H1 (cell line): ENCODE measurements at regions of chr17 and their contacts with region 1.

Region 1: DNA sequence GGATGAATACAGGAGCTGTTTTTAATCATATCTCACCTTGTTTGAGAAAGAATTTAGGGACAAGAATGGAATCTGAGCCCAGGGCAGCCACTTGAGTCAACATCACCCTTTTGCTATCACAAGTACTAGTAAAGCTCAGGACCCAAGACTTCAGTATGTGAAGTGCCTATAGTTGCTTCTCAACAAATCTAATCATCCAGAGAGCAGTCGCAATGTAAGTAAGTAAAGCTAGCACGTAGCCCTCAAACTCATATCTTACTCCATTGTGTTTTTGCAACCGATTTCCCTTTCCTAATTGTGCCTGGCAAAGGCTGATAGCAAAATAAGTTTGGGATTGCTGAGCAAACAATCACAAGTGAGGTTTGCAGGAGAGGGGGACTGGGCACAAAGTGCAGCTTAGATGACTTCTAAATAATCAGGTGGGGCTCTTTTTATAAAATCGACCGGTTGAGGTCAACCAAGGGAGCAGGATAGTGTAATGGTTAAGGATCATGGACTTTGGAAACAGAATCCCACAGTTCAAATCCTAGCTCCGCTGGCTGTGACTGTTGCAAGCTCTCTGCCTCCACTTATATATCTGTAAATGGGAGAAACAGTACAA is 13.0 kb downstream of the TOB1 start:
- DNase-seq: no peak
- H3K4me3 ChIP-seq: no peak overlapping the region
- H3K27ac ChIP-seq: no peak overlapping the region
- H3K4me1 ChIP-seq: peaks cover 0 to 4% (median 0%) of the 10 kb centered on the region in 4 experiments; a peak in 1 of 7 replicates
- H3K27me3 ChIP-seq: no peaks in the 10 kb centered on the region
- CTCF ChIP-seq: no peak
- EP300 ChIP-seq: no peak
- POLR2A ChIP-seq: no peak
- RAD21 ChIP-seq: no peak

Region 2: DNA sequence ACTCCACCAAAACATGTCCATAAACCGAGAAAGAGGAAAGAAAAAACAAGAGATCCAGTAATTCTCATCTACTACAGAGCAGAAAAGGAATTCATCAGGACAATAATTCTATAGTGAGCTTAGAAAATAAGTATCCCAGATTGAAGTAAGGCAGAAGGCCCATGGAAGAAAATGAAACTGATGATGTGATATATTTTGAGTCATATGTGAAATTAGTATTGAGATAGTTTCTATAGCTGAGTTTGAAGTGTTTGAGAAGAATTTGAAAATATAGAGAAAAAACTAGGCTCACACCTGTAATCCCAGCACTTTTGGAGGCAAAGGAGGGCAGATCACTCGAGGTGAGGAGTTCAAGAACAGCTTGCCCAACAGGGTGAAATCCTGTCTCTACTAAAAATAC is 114.0 kb before region 1 on chr17:
- CTCF ChIA-PET with region 1: no interaction called
- POLR2A ChIA-PET with region 1: no interaction called
- DNase-seq: no peak
- H3K4me3 ChIP-seq: no peak overlapping the region
- H3K27ac ChIP-seq: no peak overlapping the region
- H3K4me1 ChIP-seq: no peaks in the 10 kb centered on the region
- H3K27me3 ChIP-seq: no peaks in the 10 kb centered on the region
- CTCF ChIP-seq: no peak
- EP300 ChIP-seq: no peak
- POLR2A ChIP-seq: no peak
- RAD21 ChIP-seq: no peak

Region 3: GRCh38 chr17:50798424-50799288 is 54.5 kb before region 1 on chr17:
- CTCF ChIA-PET with region 1: interaction called, 23 read pairs
- POLR2A ChIA-PET with region 1: no interaction called
- DNase-seq: no peak
- H3K4me3 ChIP-seq: no peak overlapping the region
- H3K27ac ChIP-seq: no peak overlapping the region
- H3K4me1 ChIP-seq: peaks cover 0 to 5% (median 2%) of the 10 kb centered on the region in 4 experiments; a peak in 4 of 7 replicates
- H3K27me3 ChIP-seq: no peaks in the 10 kb centered on the region
- CTCF ChIP-seq: no peak
- EP300 ChIP-seq: no peak
- POLR2A ChIP-seq: no peak
- RAD21 ChIP-seq: no peak

Region 4: GRCh38 chr17:50834429-50835300 is 18.4 kb before region 1 on chr17:
- CTCF ChIA-PET with region 1: interaction called, 77 read pairs
- POLR2A ChIA-PET with region 1: no interaction called
- DNase-seq: no peak
- H3K4me3 ChIP-seq: no peak overlapping the region
- H3K27ac ChIP-seq: no peak overlapping the region
- H3K4me1 ChIP-seq: peaks cover 0 to 31% (median 26%) of the 10 kb centered on the region in 4 experiments; a peak in 6 of 7 replicates
- H3K27me3 ChIP-seq: no peaks in the 10 kb centered on the region
- CTCF ChIP-seq: no peak
- EP300 ChIP-seq: no peak
- POLR2A ChIP-seq: no peak
- RAD21 ChIP-seq: no peak

Region 5: DNA sequence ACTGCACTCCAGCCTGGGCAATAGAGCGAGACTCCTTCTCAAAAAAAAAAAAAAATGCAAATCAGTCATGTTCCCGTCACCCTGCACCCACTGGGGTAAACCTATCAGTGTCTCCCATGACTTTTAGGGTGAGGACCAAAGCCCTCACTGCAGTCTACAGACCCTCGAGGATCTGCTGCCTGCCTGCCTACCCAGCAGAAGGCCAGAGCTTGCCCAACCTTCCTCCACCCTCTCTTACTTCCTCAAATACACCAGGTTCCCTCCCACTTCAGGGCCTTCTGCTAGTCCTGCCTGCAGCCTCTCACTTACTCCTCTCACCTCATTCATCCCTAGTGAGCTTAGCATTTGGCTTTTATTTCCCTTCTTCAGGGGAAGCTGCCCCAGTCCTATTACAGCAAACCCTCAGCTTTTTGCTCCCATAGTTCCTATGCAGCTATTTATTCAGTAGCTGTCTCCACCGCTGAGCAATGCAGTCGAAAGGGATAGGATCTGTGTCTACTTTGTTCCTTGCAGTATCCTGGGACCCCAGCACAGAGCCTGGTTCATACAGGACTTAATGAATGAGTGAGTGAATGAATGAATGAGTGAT is 30.8 kb after region 1 on chr17:
- CTCF ChIA-PET with region 1: interaction called, 11 read pairs
- POLR2A ChIA-PET with region 1: interaction called, 3 read pairs
- DNase-seq: no peak
- H3K4me3 ChIP-seq: no peak overlapping the region
- H3K27ac ChIP-seq: no peak overlapping the region
- H3K4me1 ChIP-seq: peaks cover 0 to 5% (median under 1%) of the 10 kb centered on the region in 4 experiments; a peak in 4 of 7 replicates
- H3K27me3 ChIP-seq: no peaks in the 10 kb centered on the region
- CTCF ChIP-seq: no peak
- EP300 ChIP-seq: no peak
- POLR2A ChIP-seq: no peak
- RAD21 ChIP-seq: no peak

Region 6: DNA sequence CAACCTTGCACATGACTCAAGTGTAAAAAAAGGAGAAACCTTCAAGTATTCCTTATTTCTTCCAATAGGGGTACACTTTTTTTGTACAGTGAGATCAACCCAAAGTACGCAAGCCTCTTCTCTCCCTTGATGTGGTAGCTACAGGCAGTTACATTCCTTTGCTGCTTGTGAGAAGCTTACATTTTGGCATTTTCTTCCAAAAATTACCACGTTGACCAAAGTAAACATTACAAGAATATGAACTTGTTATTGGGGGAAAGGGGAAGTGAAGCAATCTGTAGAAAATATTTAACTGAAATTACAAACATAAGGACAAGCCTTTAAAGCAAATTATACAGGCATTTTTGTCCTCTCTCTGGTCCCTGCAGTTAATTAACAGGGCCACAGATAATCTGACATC is 110.0 kb after region 1 on chr17:
- CTCF ChIA-PET with region 1: interaction called, 735 read pairs
- POLR2A ChIA-PET with region 1: no interaction called
- DNase-seq: no peak
- H3K4me3 ChIP-seq: no peak overlapping the region
- H3K27ac ChIP-seq: no peak overlapping the region
- H3K4me1 ChIP-seq: no peaks in the 10 kb centered on the region
- H3K27me3 ChIP-seq: no peaks in the 10 kb centered on the region
- CTCF ChIP-seq: no peak
- EP300 ChIP-seq: no peak
- POLR2A ChIP-seq: no peak
- RAD21 ChIP-seq: no peak